Heart right ventricle (tissue), 16 donors: ENCODE measurements at regions of chr10 and their contacts with region 1.

Region 1: DNA sequence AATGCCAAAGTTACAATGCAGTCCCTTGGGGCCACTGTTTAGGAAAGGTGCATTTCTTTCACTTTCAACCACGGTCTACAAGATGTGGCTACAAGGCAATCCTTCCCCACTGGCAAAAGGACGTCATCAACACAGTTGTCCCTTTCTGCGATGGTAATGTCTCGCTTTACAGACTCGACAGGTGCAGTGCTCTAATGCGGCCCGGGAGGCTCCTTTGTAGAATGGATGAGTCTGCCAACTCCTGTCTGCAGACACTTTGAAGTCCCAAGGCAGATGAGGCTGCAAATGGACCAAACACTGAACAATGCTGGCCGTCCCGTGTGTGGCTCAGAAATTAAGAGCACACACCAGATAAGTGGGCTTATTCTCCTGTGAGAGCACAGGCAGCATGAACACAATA is 133.7 kb downstream of the PIP4K2A start:
- DNase-seq: no peak
- ATAC-seq: no peak
- H3K4me3 ChIP-seq: no peak overlapping the region
- H3K27ac ChIP-seq: peak overlapping the region in 1 of 10 donors; percentile 39
- H3K4me1 ChIP-seq: peaks cover 0 to 4% (median 0%) of the 10 kb centered on the region in 9 donors
- H3K27me3 ChIP-seq: no peaks in the 10 kb centered on the region
- CTCF ChIP-seq: no peak

Region 2: GRCh38 chr10:21989453-21990154 is 591.1 kb before region 1 on chr10:
- intact Hi-C with region 1: loop called in 2 of 10 experiments (anchors 10 kb)
- DNase-seq: peak; percentile 19 to 21
- ATAC-seq: peak; percentile 79 to 96 (median 90)
- H3K4me3 ChIP-seq: no peak overlapping the region
- H3K27ac ChIP-seq: no peak overlapping the region
- H3K4me1 ChIP-seq: peaks cover 0 to 13% (median 6%) of the 10 kb centered on the region in 9 donors
- H3K27me3 ChIP-seq: no peaks in the 10 kb centered on the region
- CTCF ChIP-seq: peak; percentile 10 to 66 (median 46)

Region 3: GRCh38 chr10:22010973-22011408 is 569.7 kb before region 1 on chr10:
- intact Hi-C with region 1: loop called in 1 of 10 experiments (anchors 10 kb)
- DNase-seq: no peak
- ATAC-seq: no peak
- H3K4me3 ChIP-seq: no peak overlapping the region
- H3K27ac ChIP-seq: no peak overlapping the region
- H3K4me1 ChIP-seq: peaks cover 0 to 10% (median 0%) of the 10 kb centered on the region in 9 donors
- H3K27me3 ChIP-seq: no peaks in the 10 kb centered on the region
- CTCF ChIP-seq: peak; percentile 38 to 68 (median 61)